T-cell (primary cell): ENCODE measurements at regions of chr6 and their contacts with region 1.

Region 1: DNA sequence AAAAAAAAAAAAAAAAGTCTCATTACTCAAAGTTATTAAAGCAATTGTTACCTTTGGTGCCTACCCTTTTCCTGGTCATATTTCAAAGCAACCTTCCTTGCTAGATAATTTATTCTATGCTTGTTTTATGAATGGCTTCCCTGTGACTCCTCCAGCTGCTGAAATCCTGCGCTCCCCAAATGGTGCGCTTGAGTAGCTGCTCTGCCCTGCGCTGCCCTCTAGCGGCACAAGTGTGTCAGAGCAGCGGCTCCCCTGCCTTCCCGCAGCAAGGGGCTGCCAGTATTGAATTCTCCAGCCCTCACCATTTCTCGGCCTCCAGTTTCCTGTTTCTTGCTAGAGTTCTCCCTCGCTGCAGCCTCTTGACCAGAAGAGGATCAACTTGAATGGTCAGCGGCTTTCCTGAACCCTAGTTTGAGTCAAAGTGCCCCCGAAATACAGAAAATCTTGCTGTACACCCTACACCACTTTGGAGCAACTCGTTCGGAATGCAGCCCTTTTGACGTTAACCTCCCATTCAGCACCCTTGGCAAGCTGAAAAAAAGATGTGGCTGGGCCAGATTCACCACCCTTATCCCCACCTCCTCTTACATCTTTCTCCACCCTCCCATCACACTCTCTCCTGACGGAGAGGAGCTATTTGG is 60.4 kb upstream of the KLHL31 start:
- DNase-seq: peak; percentile 32 to 85 (median 64)
- ATAC-seq: peak; percentile 86 to 90 (median 90)
- H3K4me3 ChIP-seq: no peak overlapping the region
- H3K4me3 Mint-ChIP-seq: no peak overlapping the region
- H3K27ac ChIP-seq: no peak overlapping the region
- H3K27ac Mint-ChIP-seq: no peak overlapping the region
- H3K4me1 ChIP-seq: peaks cover 0 to 3% of the 10 kb centered on the region in 2 experiments
- H3K4me1 Mint-ChIP-seq: peaks cover 8 to 13% (median 8%) of the 10 kb centered on the region in 3 donors
- H3K27me3 ChIP-seq: peaks cover 0 to 4% of the 10 kb centered on the region in 2 experiments
- H3K27me3 Mint-ChIP-seq: peaks cover 10 to 11% of the 10 kb centered on the region in 2 donors

Region 2: DNA sequence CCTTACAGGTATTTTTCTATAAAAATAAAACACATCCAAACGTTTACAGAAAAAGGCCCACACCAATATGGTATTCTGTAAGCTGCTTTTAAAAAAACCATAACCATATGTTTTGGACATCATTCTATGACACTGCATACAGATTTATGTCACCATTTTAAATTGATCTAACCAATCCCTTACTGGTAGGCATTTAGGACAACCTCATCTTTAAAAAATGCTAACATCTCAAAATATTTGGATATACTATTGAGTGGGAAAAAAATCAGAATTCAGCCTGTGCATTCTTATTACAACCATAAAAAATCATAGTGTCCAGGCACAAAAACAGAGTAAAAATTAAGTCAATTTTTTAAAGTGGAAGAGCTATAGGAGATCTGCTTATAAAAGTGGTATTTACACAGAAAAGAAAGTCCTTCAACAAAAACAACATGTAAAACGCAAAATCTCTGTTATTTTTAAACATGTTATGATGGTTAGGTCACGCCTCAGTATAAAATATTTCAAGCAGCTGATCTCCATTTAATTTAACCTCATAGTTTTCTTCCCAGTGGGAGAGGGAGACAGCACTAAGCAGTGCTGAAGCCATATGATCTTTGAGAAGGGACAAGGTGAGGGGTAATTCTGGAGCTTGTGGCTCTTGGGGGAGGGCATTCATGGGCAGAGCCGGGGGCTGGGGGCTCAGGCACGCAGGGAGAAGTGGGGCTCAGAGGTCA is 1170.2 kb before region 1 on chr6:
- CTCF ChIA-PET with region 1: interaction called in 1 of 2 experiments, 11 read pairs
- POLR2A ChIA-PET with region 1: no interaction called
- DNase-seq: no peak
- ATAC-seq: no peak
- H3K4me3 ChIP-seq: no peak overlapping the region
- H3K4me3 Mint-ChIP-seq: no peak overlapping the region
- H3K27ac ChIP-seq: no peak overlapping the region
- H3K27ac Mint-ChIP-seq: no peak overlapping the region
- H3K4me1 ChIP-seq: peaks cover 0 to 15% of the 10 kb centered on the region in 2 experiments
- H3K4me1 Mint-ChIP-seq: peaks cover 32 to 39% (median 32%) of the 10 kb centered on the region in 3 donors
- H3K27me3 ChIP-seq: no peaks in the 10 kb centered on the region
- H3K27me3 Mint-ChIP-seq: no peaks in the 10 kb centered on the region

Region 3: DNA sequence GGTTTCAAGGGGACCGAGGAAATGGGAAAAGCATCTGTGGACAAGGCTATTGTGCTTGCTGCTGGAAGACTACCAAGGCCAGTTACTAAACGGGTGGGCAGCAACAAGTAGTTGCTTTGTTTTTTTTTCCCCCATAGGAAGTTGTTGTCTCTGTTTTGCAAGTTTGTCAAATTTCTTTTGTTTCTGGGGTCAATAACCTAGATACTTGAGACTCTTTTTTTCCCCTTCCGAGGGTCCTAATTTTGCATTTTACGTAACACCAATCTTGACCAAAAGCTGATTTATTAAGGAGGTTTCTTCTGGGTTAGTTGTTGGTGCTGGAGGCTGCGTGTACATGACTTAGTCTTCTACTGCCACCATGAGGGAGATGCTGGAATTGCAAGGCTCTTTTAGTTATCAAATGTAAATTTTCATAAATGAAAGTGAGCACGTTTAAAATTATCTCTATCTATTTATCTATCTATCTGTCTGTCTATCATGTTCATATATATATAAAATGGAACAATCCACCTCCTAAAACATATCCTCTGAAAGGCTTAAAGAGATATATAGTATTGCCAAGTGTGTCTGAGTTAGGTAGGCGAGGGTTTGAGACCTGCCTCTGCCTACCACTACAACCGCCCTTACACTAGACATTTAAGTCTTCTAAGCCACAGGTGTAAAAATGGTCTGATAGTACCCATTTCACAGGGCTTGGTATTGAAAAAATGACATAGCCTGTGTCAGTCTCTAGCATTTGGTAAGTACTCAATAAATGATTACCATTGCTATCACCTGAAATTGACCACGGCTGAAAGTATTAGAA is 241.2 kb before region 1 on chr6:
- CTCF ChIA-PET with region 1: interaction called, 6 to 15 read pairs
- POLR2A ChIA-PET with region 1: no interaction called
- DNase-seq: peak in 33 of 35 experiments; percentile 19 to 85 (median 61)
- ATAC-seq: peak in 2 of 4 experiments; percentile 47 to 63
- H3K4me3 ChIP-seq: no peak overlapping the region
- H3K4me3 Mint-ChIP-seq: no peak overlapping the region
- H3K27ac ChIP-seq: no peak overlapping the region
- H3K27ac Mint-ChIP-seq: no peak overlapping the region
- H3K4me1 ChIP-seq: no peaks in the 10 kb centered on the region
- H3K4me1 Mint-ChIP-seq: peaks cover 0 to 20% (median 7%) of the 10 kb centered on the region in 3 donors
- H3K27me3 ChIP-seq: peaks cover 0 to 4% of the 10 kb centered on the region in 2 experiments
- H3K27me3 Mint-ChIP-seq: peaks cover 21 to 46% of the 10 kb centered on the region in 2 donors

Region 4: DNA sequence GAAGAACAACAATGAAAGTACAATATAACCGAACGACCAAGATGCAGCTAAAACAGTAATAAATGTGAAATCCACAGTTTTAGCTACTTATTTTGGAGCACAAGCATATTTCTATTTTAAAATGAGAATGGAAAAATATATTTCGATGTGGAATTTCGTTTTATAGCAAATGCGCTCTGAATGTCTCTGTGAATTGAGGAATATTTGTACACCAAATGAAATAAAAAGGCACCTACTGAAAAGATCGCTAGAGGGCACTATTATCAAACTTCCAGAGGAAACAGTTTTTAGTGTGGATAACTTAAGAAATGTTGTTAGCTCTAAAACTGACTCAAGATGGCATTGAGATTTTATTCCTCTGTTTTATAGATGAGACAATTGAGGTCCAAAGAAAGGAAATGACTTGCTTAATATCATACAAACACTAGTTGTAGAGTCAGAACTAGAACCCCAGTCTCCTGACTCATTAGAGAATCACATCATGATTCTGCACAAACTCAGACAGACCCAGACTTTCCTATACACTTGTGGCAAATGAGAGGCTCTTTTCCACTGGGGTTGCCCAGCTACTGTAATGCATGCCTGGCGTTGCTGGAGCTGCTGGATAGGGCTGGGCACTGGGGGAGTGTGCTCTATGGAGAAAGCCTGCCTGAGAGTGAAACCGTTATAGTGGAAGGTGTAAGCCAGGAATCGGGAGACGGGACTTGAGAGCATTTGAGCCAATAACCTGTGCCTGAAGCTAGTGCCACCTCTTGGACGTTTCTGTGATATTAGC is 232.9 kb before region 1 on chr6:
- CTCF ChIA-PET with region 1: interaction called, 54 to 141 read pairs
- POLR2A ChIA-PET with region 1: interaction called, 3 to 9 read pairs
- DNase-seq: peak in 1 of 35 experiments; percentile 66
- ATAC-seq: peak; percentile 47 to 58 (median 50)
- H3K4me3 ChIP-seq: no peak overlapping the region
- H3K4me3 Mint-ChIP-seq: no peak overlapping the region
- H3K27ac ChIP-seq: no peak overlapping the region
- H3K27ac Mint-ChIP-seq: no peak overlapping the region
- H3K4me1 ChIP-seq: peaks cover 0 to 2% of the 10 kb centered on the region in 2 experiments
- H3K4me1 Mint-ChIP-seq: peaks cover 0 to 5% (median 2%) of the 10 kb centered on the region in 3 donors
- H3K27me3 ChIP-seq: peaks cover 0 to 2% of the 10 kb centered on the region in 2 experiments
- H3K27me3 Mint-ChIP-seq: peaks cover 7 to 25% of the 10 kb centered on the region in 2 donors

Region 5: GRCh38 chr6:53624502-53624901 is 101.4 kb before region 1 on chr6:
- CTCF ChIA-PET with region 1: interaction called in 1 of 2 experiments, 14 read pairs
- POLR2A ChIA-PET with region 1: no interaction called
- DNase-seq: no peak
- ATAC-seq: no peak
- H3K4me3 ChIP-seq: no peak overlapping the region
- H3K4me3 Mint-ChIP-seq: no peak overlapping the region
- H3K27ac ChIP-seq: no peak overlapping the region
- H3K27ac Mint-ChIP-seq: no peak overlapping the region
- H3K4me1 ChIP-seq: no peaks in the 10 kb centered on the region
- H3K4me1 Mint-ChIP-seq: no peaks in the 10 kb centered on the region
- H3K27me3 ChIP-seq: no peaks in the 10 kb centered on the region
- H3K27me3 Mint-ChIP-seq: peaks cover 7 to 18% of the 10 kb centered on the region in 2 donors

Region 6: DNA sequence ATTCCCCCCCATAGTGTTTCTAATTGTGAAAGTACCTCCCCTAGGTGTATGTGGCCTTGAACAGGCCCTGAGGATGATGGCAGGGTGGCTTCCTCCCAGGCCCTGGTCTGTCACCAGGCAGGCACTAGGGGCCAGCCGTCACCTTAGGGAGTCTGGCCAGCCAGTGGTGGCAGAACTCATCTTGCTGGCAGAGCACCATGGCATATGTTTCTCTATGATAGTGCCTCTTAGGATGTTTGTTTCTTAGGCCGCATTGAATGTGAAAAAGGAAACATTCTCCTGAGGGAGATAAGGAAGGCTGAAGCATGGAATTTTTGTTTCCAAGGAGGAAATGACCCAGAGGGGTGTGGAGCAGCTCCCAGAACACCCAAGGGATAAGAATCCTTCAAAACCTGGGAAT is 15.1 kb before region 1 on chr6:
- CTCF ChIA-PET with region 1: interaction called, 8 to 10 read pairs
- POLR2A ChIA-PET with region 1: interaction called, 3 to 6 read pairs
- DNase-seq: no peak
- ATAC-seq: no peak
- H3K4me3 ChIP-seq: no peak overlapping the region
- H3K4me3 Mint-ChIP-seq: no peak overlapping the region
- H3K27ac ChIP-seq: no peak overlapping the region
- H3K27ac Mint-ChIP-seq: no peak overlapping the region
- H3K4me1 ChIP-seq: no peaks in the 10 kb centered on the region
- H3K4me1 Mint-ChIP-seq: no peaks in the 10 kb centered on the region
- H3K27me3 ChIP-seq: peaks cover 0 to 3% of the 10 kb centered on the region in 2 experiments
- H3K27me3 Mint-ChIP-seq: peaks cover 10 to 29% of the 10 kb centered on the region in 2 donors

Region 7: DNA sequence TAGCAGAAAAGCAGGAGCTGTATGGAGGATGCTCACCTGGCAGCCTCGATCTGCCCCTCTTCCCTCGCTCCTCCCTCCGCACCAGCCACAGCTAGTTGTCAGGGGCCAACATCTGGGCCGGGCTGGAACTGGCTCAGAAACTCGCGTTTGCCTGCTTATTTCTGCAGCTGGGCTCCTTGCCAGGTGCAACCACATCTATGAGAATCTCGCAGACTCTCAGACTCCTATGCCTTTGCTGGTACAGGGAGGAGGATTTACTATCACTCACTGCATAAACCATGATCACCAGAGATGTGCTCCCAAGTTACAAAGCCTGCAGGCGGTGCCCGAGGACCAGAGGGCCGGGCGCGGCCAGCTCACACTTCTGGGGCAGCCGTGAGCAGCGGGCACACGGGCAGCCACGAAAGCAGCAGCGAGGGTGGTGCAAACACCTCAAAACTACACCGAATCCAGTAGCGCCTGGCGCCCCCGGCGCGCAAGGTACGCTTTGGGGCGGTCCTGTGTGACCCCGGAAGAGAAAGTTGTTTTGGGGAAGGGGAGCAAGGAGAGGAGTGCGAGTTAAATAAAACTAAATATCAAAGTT is 68.3 kb after region 1 on chr6:
- CTCF ChIA-PET with region 1: interaction called, 5 to 13 read pairs
- POLR2A ChIA-PET with region 1: no interaction called
- DNase-seq: peak; percentile 41 to 81 (median 62)
- ATAC-seq: peak; percentile 60 to 77 (median 67)
- H3K4me3 ChIP-seq: peak overlapping the region; percentile 62 to 96
- H3K4me3 Mint-ChIP-seq: peak overlapping the region; percentile 96 to 97 (median 96)
- H3K27ac ChIP-seq: peak overlapping the region; percentile 19
- H3K27ac Mint-ChIP-seq: peak overlapping the region; percentile 82 to 91
- H3K4me1 ChIP-seq: peaks cover 15 to 29% of the 10 kb centered on the region in 2 experiments
- H3K4me1 Mint-ChIP-seq: peaks cover 28 to 31% (median 29%) of the 10 kb centered on the region in 3 donors
- H3K27me3 ChIP-seq: peaks cover 0 to 15% of the 10 kb centered on the region in 2 experiments
- H3K27me3 Mint-ChIP-seq: peaks cover 12 to 19% of the 10 kb centered on the region in 2 donors